Sciatic nerve (tissue), 2 donors: ENCODE measurements at regions of chr20 and their contacts with region 1.

Region 1: DNA sequence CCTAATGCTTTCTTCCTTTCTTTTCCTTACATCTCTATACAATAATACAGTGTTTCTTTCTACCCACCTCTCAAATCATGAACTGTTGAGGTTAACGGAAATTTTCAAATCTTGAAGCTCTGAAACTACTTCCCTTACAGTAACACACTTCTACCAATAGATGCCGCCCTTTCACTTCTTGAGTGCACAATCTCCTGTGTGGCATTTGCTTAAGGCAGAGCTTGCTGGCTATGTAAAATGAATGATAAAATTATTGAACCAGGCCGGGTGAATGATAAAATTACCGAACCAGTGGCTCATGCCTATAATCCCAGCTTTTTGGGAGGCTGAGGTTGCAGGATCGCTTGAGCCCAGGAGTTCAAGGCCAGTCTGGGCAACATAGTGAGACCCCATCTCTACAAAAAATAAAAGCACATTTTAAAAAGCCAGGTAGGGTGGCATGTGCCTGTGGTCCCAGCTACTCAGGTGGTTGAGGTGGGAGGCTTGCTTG is 56.8 kb downstream of the KCNS1 start:
- DNase-seq: no peak
- ATAC-seq: peak; percentile 78

Region 2: GRCh38 chr20:43650997-43651525 is 1393.1 kb before region 1 on chr20:
- intact Hi-C with region 1: no loop called
- DNase-seq: no peak
- ATAC-seq: no peak

Region 3: GRCh38 chr20:44861531-44862006 is 182.6 kb before region 1 on chr20:
- intact Hi-C with region 1: no loop called
- DNase-seq: no peak
- ATAC-seq: peak; percentile 83

Region 4: DNA sequence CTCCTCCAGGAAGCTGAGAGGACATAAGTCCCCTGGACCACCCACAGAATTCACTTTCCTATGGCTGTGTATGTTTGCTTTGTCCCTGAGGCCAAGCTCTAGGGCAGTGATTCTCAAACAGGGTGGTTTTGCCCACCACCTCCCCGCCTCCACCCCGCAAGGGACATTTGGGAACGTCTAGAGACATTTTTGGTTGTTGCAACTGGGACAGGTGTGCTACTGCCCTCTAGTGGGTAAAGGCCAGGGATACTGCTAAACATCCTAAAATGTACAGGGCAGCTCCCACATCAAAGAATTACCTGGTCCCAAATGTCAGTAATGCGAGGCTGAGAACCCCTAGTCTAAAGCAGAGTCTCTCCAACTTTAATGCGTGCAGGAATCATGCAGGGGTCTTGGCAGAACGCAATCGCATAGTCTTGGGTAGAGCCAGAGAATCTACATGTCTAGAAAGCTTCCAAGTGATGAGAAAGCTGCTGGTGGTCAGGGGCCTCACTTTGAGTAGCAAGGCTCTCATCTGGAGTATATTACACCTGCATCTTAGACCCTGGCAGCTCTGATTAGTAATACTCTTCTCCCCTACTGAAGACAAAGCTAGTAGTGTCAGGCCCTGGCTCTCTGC is 51.7 kb after region 1 on chr20:
- intact Hi-C with region 1: loop called (anchors 5 kb)
- DNase-seq: peak; percentile 71
- ATAC-seq: peak; percentile 64

Region 5: DNA sequence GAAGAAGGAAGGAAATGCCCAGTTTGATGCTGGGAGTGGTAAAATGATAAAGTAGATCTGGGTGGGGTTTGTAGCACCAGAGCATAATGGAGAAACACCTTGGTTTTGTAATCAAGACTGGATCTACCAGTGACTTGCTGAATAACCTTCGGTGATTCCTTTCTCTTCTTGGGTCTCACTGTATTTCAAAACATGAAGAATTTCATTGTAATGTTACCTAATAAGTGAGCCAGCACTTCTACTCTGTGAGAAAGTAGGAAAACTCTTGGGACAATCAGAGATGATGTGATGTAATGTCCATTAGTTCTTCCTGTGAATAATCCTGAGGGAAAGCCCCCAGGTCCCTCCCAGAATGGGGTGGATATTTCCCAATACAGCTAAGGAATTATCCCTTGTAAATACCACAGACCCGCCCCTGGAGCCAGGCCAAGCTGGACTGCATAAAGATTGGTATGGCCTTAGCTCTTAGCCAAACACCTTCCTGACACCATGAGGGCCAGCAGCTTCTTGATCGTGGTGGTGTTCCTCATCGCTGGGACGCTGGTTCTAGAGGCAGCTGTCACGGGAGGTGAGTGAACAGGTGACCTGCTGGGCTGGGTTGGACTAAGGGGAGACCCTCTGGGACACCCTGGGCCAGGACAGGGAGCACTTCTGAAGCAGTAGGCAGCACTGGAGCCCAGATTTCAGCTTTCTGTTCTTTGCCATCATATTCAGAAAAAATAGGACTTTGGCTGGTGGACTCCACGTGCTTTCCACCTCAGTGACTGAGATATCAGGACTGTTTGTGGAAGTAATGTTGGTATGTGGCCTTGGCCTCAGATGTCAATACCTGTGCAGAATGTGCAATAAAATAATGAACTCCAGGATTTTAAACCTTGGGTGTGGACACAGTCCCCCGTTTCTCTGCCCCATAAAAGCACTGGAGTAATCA is 130.6 kb after region 1 on chr20 and contains the start of gene PI3:
- intact Hi-C with region 1: no loop called
- DNase-seq: no peak
- ATAC-seq: no peak
- total RNA-seq, gene PI3: 1.8 TPM